Natural killer cell (primary cell): ENCODE measurements at regions of chr11 and their contacts with region 1.

Region 1: GRCh38 chr11:113532697-113533424 is 57.7 kb upstream of the DRD2 start:
- DNase-seq: peak; percentile 36 to 75
- ATAC-seq: peak in 2 of 3 donors; percentile 52 to 71
- H3K4me3 ChIP-seq: no peak overlapping the region
- H3K4me3 Mint-ChIP-seq: no peak overlapping the region
- H3K27ac ChIP-seq: no peak overlapping the region
- H3K27ac Mint-ChIP-seq: no peak overlapping the region
- H3K4me1 ChIP-seq: no peaks in the 10 kb centered on the region
- H3K4me1 Mint-ChIP-seq: peaks cover 0 to 6% of the 10 kb centered on the region in 2 donors
- H3K27me3 ChIP-seq: no peaks in the 10 kb centered on the region
- H3K27me3 Mint-ChIP-seq: peaks cover 27 to 35% of the 10 kb centered on the region in 2 donors
- CTCF ChIP-seq: peak; percentile 73

Region 2: DNA sequence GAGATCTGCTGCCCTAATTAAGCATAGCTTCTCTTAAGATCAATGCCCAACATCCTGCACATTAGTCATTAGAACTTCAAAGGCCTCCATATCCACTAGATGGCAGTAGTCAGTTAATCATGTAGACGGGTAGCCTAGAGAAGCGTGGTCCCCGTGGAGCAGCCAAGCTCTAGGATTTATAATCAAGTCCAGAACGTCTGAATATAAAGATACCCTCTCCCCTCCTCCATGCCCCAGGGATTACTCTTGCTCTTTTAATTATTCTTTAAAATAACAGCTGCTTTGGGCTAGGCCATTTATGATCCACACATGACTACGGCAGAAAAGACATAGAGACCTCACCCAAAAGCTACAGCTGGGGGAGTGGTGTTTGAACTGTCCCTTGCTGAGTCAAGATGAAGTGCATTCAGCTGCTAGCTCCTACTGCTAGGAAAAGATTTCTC is 944.6 kb before region 1 on chr11:
- intact Hi-C with region 1: loop called (anchors 5 kb)
- DNase-seq: peak in 1 of 2 donors; percentile 72
- ATAC-seq: peak; percentile 61 to 93 (median 68)
- H3K4me3 ChIP-seq: no peak overlapping the region
- H3K4me3 Mint-ChIP-seq: no peak overlapping the region
- H3K27ac ChIP-seq: no peak overlapping the region
- H3K27ac Mint-ChIP-seq: no peak overlapping the region
- H3K4me1 ChIP-seq: no peaks in the 10 kb centered on the region
- H3K4me1 Mint-ChIP-seq: no peaks in the 10 kb centered on the region
- H3K27me3 ChIP-seq: no peaks in the 10 kb centered on the region
- H3K27me3 Mint-ChIP-seq: peaks cover 9% of the 10 kb centered on the region in 2 donors
- CTCF ChIP-seq: peak; percentile 78

Region 3: DNA sequence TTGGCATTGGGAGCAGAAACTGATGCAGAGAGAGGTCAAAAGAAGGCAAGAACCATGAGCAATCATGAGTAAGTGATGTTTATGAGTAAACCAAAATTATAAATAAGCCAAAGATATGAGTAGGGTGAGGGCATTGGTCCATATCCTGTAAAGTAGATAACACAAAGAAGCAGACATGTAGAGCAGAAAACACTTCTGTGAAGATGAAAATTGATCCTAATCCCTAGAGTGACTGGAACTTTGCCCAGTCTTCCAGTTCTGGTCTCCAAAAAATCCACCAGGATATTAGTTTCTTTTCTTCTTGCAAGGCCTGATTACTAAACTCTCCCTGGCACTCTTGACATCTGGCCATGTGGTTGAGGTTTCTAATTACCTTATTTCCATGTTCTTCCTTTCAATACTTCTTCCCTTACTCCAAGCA is 43.9 kb before region 1 on chr11:
- intact Hi-C with region 1: no loop called
- DNase-seq: no peak
- ATAC-seq: no peak
- H3K4me3 ChIP-seq: no peak overlapping the region
- H3K4me3 Mint-ChIP-seq: no peak overlapping the region
- H3K27ac ChIP-seq: no peak overlapping the region
- H3K27ac Mint-ChIP-seq: no peak overlapping the region
- H3K4me1 ChIP-seq: no peaks in the 10 kb centered on the region
- H3K4me1 Mint-ChIP-seq: no peaks in the 10 kb centered on the region
- H3K27me3 ChIP-seq: no peaks in the 10 kb centered on the region
- H3K27me3 Mint-ChIP-seq: peaks cover 7 to 9% of the 10 kb centered on the region in 2 donors
- CTCF ChIP-seq: no peak